Activated CD8-positive, alpha-beta T cell treated with anti-CD3 and anti-CD28 coated beads, Interleukin-2, amount 10 ng/mL, durations not matched to agents 7 days and 5 days (primary cell): ENCODE measurements at regions of chr3 and their contacts with region 1.

Region 1: DNA sequence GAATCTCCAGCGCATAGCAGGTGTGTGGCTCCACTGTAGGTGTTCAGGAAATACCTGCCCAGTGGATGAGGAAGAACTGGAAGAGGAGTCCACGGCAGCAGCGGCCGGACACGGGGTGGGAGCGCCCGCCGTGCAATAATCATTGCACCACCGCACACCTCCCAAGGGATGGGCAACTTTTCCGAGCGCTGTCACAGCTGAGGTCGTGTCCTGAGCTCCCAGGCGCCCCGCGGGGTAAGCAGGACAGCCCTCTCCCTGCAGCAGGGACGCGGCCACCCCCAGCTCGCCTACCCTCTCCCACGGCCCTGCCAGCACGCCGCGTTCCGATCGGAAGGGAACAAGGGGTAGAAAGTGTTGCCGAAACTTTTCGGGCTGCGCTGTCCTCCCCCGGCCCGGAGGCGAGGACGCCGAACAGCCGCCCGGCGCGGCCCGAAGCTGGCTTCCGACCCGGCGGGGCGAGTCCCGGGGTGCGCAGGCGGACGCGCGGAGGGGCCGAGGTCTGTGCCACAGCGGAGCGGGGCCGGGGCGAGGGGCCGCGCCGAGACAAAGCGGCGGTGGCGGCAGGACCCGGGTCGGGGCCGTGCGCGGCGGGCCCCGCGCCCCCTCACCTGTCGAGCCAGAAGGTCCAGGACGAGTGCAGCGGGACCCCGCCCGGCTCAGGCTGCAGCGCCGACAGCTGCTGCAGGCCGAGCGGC is 471 bp downstream of the EIF4E3 start:
- DNase-seq: peak; percentile 45
- ATAC-seq: peak; percentile 43
- H3K4me3 Mint-ChIP-seq: peak overlapping the region; percentile 94
- H3K27ac Mint-ChIP-seq: peak overlapping the region; percentile 92
- H3K4me1 Mint-ChIP-seq: peaks cover 59% of the 10 kb centered on the region
- H3K27me3 Mint-ChIP-seq: no peaks in the 10 kb centered on the region

Region 2: DNA sequence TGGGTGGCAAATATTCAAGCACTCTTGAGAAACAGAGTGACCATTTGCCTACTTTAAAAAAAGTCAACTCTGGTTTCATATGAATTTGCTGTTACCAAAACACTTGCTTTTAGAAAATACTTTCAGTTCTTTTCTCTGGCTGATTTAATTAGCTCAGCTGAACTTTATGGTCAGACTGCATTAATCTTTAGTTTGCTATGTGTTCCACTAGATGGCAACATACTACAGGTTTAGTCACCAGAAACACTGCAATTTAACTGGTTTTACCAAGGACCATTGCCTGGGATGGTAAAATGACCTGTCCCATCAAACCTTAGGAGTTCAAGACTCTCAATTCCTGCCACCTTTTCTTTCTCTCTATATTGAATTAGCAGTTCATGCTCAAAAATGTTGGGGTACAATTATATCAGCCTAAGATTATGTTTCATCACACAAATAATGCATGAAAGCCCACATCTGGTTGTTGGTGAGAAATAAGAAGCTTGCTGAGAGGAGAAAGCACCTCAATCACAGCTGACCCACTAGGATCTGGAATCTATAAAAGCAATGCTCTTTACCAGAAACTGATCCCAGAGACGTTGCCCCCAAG is 13.7 kb before region 1 on chr3:
- CTCF ChIA-PET with region 1: interaction called, 70 read pairs
- POLR2A ChIA-PET with region 1: no interaction called
- DNase-seq: no peak
- ATAC-seq: peak; percentile 67
- H3K4me3 Mint-ChIP-seq: no peak overlapping the region
- H3K27ac Mint-ChIP-seq: no peak overlapping the region
- H3K4me1 Mint-ChIP-seq: peaks cover 69% of the 10 kb centered on the region
- H3K27me3 Mint-ChIP-seq: no peaks in the 10 kb centered on the region

Region 3: DNA sequence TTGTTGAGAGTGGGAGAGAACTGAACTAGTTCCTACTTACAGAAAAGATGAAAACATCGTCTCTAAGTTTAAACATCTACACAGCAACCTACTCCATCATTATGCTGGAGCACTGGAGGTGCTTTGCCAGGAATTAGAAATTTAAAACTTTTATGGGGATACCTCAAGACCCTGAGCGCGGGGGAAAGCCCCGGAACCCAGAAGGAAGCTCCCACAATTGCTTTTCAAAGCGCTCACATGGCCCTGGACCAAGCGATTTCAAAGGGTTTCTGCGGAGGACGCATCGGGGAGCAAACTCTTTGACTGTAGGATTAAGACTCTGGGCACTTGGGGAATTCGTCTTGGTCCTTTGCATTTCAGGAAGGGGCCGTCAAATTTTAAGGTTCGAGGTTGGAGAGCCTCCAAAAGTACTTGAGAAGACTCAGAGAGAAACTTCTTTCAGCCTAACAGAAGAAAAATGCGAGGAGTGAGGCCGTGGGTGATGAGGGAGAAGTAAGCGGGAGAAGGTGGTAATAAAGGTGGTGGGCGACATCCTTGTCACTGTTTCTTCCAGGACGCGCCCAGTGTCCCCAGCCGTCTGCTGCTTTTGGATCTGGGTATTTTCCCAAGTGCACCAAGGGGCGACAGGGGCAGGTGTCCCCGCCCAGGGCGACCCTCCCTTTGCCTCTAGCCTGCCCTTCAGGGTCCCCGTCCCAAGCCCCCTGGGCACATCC is 59.6 kb after region 1 on chr3:
- CTCF ChIA-PET with region 1: interaction called, 10 read pairs
- POLR2A ChIA-PET with region 1: no interaction called
- DNase-seq: no peak
- ATAC-seq: peak; percentile 6
- H3K4me3 Mint-ChIP-seq: peak overlapping the region; percentile 49
- H3K27ac Mint-ChIP-seq: no peak overlapping the region
- H3K4me1 Mint-ChIP-seq: peaks cover 30% of the 10 kb centered on the region
- H3K27me3 Mint-ChIP-seq: peaks cover 56% of the 10 kb centered on the region

Region 4: DNA sequence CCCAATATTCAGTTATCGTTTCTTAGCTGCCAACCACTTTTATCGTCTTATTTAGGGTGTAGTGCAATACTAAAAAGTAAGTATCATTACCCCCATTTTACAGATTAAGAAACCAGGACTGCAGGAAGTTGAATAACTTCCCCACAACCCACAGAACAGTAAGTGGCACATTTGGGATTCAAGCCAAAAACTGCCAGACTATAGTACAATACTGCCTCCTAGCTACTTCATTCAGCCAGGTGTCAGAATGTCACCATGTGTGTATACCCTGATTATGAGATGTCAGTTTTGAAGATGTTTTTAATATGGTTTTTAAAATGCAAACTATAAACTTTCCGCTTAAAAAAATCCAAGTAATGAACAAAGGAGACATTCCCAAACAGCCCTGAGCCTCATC is 134.4 kb after region 1 on chr3:
- CTCF ChIA-PET with region 1: interaction called, 31 read pairs
- POLR2A ChIA-PET with region 1: no interaction called
- DNase-seq: peak; percentile 28
- ATAC-seq: peak; percentile 57
- H3K4me3 Mint-ChIP-seq: no peak overlapping the region
- H3K27ac Mint-ChIP-seq: no peak overlapping the region
- H3K4me1 Mint-ChIP-seq: peaks cover 6% of the 10 kb centered on the region
- H3K27me3 Mint-ChIP-seq: peaks cover 15% of the 10 kb centered on the region